Left ventricle myocardium inferior (tissue), 1 donor: ENCODE measurements at regions of chr5 and their contacts with region 1.

Region 1: GRCh38 chr5:113378959-113379541 is 55.7 kb downstream of the TSSK1B start:
- DNase-seq: peak; percentile 22
- H3K4me3 ChIP-seq: no peak overlapping the region
- H3K27ac ChIP-seq: no peak overlapping the region
- H3K4me1 ChIP-seq: peaks cover 24% of the 10 kb centered on the region
- H3K27me3 ChIP-seq: no peaks in the 10 kb centered on the region
- CTCF ChIP-seq: peak; percentile 79

Region 2: DNA sequence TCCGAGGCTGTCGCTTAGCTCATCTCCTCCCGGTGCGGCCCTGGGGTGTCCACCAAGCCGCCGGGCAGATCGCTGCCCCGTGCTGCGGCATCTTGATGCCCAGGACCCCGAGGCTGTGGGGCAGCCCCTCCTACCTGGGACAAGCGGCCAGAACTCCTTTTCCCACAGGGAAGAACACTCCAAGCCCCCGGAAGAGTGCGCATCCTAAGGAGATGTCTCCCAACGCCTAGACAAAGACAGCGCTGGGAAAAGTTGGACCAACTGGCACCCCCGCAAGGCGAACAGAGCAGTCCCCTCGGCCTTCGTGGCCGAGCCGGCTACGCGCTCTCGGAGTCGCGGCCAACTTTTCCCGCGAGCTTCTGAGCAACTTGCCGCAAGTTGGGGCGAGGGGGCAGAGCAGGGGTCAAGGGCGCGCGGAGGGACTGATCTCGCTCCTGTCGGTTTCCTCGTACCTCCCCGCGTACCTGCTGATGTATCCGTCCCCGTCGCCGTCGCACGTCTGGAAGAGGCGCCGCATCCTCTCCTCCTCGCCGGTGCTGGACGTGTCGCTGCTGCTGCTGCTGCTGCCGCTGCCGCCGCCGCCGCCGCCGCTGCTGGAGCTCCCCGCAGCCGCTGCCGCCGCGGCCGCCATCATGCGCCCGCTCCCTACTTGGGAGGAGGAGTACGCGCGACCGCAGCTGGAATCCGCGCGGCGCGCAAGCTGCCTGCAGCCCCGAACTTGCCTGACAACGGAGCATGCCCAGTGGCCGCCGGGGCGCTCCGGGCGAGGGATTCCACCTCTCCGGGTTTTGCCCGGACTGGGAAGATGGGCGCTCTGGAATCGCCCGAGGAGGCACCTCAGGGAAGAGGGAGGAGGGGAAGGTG is 109.0 kb after region 1 on chr5 and contains the start of gene MCC:
- intact Hi-C with region 1: loop called (anchors 10 kb)
- DNase-seq: peak; percentile 79
- H3K4me3 ChIP-seq: peak within 1 kb of the TSS; percentile 77
- H3K27ac ChIP-seq: peak within 1 kb of the TSS; percentile 57
- H3K4me1 ChIP-seq: peaks cover 22% of the 10 kb centered on the region
- H3K27me3 ChIP-seq: peaks cover 64% of the 10 kb centered on the region
- CTCF ChIP-seq: no peak
- total RNA-seq, gene MCC: 31.6 TPM

Region 3: DNA sequence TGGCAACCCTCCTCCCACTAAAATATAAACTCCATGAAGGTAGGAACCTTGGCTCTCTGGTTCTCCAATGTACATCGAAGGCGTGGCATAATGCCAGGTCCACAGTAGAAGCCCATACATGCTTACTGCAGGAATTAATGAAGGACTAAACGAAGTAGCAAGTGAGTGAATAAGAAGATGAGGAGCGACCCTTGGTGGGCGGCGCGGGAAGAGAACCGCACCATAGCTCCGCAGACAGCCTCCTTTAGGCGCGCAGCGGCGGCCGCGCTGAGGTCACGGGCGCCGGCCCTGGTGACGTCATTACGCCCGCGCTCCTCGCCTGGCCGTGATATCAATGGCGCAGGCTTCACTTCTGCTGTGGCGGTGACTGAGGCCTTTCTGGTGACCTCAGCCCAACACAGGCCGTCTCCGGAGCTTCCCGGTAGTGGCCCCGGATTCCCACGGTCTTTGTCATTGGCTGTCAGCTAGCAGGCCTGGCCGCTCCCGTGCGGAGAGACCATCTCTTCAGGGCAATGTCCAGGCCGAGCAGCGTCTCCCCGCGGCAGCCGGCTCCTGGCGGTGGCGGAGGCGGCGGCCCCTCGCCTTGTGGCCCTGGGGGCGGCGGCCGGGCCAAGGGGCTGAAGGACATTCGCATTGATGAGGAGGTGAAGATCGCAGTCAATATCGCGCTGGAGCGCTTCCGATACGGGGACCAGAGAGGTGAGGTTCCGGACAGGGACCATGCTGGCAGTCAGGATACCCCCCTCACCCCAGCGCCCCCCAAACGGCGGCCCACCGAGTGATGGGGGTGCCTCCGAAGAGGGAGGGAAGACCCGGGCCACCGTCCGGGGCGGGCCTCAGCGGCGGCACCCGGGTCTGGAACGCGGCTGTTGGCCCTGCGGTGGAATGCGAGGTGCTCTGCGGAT is 134.6 kb after region 1 on chr5 and contains the start of gene YTHDC2:
- intact Hi-C with region 1: loop called (anchors 2 kb)
- DNase-seq: peak; percentile 89
- H3K4me3 ChIP-seq: peak within 1 kb of the TSS; percentile 79
- H3K27ac ChIP-seq: peak within 1 kb of the TSS; percentile 92
- H3K4me1 ChIP-seq: peaks cover 41% of the 10 kb centered on the region
- H3K27me3 ChIP-seq: no peaks in the 10 kb centered on the region
- CTCF ChIP-seq: peak; percentile 42
- total RNA-seq, gene YTHDC2: 13.6 TPM

Region 4: DNA sequence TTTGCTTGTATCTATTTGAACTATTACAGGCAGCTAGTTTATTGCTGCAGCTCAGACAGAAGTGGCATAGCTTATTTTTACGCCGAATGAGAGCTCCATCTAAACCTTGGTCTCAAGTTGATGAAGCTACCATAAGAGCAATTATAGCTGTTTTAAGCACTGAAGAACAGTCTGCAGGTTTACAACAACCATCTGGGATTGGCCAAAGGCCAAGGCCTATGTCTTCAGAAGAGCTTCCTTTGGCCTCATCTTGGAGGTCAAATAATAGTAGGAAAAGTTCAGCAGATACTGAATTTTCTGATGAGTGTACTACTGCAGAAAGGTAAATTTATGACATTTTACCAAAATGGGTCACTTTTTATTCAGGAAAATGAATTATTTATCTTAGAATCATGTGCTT is 202.3 kb after region 1 on chr5:
- intact Hi-C with region 1: no loop called
- DNase-seq: no peak
- H3K4me3 ChIP-seq: no peak overlapping the region
- H3K27ac ChIP-seq: no peak overlapping the region
- H3K4me1 ChIP-seq: peaks cover 13% of the 10 kb centered on the region
- H3K27me3 ChIP-seq: no peaks in the 10 kb centered on the region
- CTCF ChIP-seq: no peak

Region 5: GRCh38 chr5:113606298-113607134 is 227.5 kb after region 1 on chr5:
- intact Hi-C with region 1: loop called (anchors 10 kb)
- DNase-seq: no peak
- H3K4me3 ChIP-seq: peak overlapping the region; percentile 24
- H3K27ac ChIP-seq: no peak overlapping the region
- H3K4me1 ChIP-seq: no peaks in the 10 kb centered on the region
- H3K27me3 ChIP-seq: no peaks in the 10 kb centered on the region
- CTCF ChIP-seq: peak; percentile 82